Activated CD8-positive, alpha-beta memory T cell treated with anti-CD3 and anti-CD28 coated beads, Interleukin-2, amount 10 ng/mL, durations not matched to agents 7 days and 5 days (primary cell): ENCODE measurements at regions of chr3 and their contacts with region 1.

Region 1: DNA sequence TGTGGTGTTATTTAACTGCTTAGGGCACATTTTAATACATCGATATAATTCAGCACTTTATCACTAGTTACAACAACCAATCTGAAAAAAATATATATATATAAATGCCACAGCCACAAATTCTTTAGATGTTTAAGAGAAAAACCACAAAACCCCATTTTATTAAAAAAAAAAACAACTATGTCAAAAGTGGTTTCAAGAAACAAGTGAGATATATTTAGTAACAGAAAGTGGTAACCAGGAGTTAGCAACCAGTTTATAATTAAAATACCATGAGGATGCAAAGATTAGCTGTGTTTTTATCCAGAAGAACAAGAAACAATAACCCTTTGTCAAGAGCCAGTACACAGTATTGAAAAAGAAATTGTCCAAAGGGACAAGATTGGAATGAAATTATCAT is 14.8 kb upstream of the DIPK2A start:
- DNase-seq: no peak
- ATAC-seq: no peak
- H3K4me3 Mint-ChIP-seq: no peak overlapping the region
- H3K27ac Mint-ChIP-seq: no peak overlapping the region
- H3K4me1 Mint-ChIP-seq: peaks cover 13% of the 10 kb centered on the region
- H3K27me3 Mint-ChIP-seq: peaks cover 33% of the 10 kb centered on the region

Region 2: GRCh38 chr3:143972505-143973255 is 15.8 kb after region 1 on chr3:
- CTCF ChIA-PET with region 1: interaction called, 15 read pairs
- DNase-seq: peak; percentile 81
- ATAC-seq: peak; percentile 14
- H3K4me3 Mint-ChIP-seq: peak overlapping the region; percentile 95
- H3K27ac Mint-ChIP-seq: peak overlapping the region; percentile 90
- H3K4me1 Mint-ChIP-seq: peaks cover 27% of the 10 kb centered on the region
- H3K27me3 Mint-ChIP-seq: peaks cover 15% of the 10 kb centered on the region